ENCODE measurements at regions of chr19 and their contacts with region 1.

Region 1: DNA sequence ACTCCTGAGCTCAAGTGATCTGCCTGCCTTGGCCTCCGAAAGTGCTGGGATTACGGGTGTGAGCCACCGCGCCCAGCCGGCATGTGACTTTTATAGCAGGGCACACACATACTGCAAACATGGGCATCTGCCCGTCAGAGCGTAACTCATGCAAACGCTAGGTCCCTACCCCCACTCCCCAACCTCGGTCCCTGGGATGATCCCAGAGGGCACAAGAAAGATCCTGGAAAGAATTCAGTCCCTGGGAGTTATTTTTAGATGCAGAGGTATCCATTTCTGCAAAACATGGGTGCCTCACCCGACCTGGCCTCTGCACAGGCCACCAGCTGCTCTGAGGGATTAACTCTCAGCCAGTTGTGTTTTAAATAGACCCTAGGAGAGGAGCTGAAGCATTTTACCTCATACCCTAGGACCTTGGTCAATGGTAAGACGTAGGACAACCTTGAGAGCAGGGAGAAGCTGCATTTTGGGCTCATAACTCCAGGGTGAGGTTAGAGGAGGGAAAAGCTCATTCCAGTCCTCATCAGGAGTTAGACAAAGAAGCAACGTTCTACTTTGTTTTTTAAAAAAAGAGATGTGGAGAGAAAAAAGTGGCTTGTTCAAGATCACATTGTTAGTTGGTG is 10.8 kb downstream of the TMEM38A start:
- DNase-seq: no peak
- ATAC-seq: no peak
- H3K4me3 ChIP-seq: no peak overlapping the region
- H3K4me3 Mint-ChIP-seq: no peak overlapping the region
- H3K27ac ChIP-seq: no peak overlapping the region
- H3K27ac Mint-ChIP-seq: no peak overlapping the region
- H3K4me1 ChIP-seq: no peaks in the 10 kb centered on the region
- H3K4me1 Mint-ChIP-seq: no peaks in the 10 kb centered on the region
- H3K27me3 ChIP-seq: peaks cover 0 to 2% of the 10 kb centered on the region in 2 experiments
- H3K27me3 Mint-ChIP-seq: peaks cover 0 to 3% of the 10 kb centered on the region in 2 donors

Region 2: GRCh38 chr19:16771618-16772017 is 99.9 kb after region 1 on chr19:
- CTCF ChIA-PET with region 1: no interaction called
- POLR2A ChIA-PET with region 1: interaction called in 1 of 2 experiments, 10 read pairs
- DNase-seq: peak; percentile 32 to 89 (median 61)
- ATAC-seq: peak; percentile 65 to 79 (median 70)
- H3K4me3 ChIP-seq: no peak overlapping the region
- H3K4me3 Mint-ChIP-seq: no peak overlapping the region
- H3K27ac ChIP-seq: no peak overlapping the region
- H3K27ac Mint-ChIP-seq: no peak overlapping the region
- H3K4me1 ChIP-seq: no peaks in the 10 kb centered on the region
- H3K4me1 Mint-ChIP-seq: no peaks in the 10 kb centered on the region
- H3K27me3 ChIP-seq: peaks cover 0 to 55% of the 10 kb centered on the region in 2 experiments
- H3K27me3 Mint-ChIP-seq: peaks cover 32 to 33% of the 10 kb centered on the region in 2 donors